ENCODE measurements at regions of chr6 and their contacts with region 1.

Region 1: GRCh38 chr6:100951597-100951996 is 70.5 kb upstream of the ASCC3 start:
- DNase-seq: no peak
- H3K4me3 ChIP-seq: no peak overlapping the region
- H3K27ac ChIP-seq: no peak overlapping the region
- H3K4me1 ChIP-seq: no peaks in the 10 kb centered on the region
- H3K27me3 ChIP-seq: no peaks in the 10 kb centered on the region
- CTCF ChIP-seq: no peak
- POLR2A ChIP-seq: no peak

Region 2: GRCh38 chr6:100171533-100172321 is 779.9 kb before region 1 on chr6:
- intact Hi-C with region 1: loop called (anchors 5 kb)
- DNase-seq: no peak
- H3K4me3 ChIP-seq: no peak overlapping the region
- H3K27ac ChIP-seq: no peak overlapping the region
- H3K4me1 ChIP-seq: no peaks in the 10 kb centered on the region
- H3K27me3 ChIP-seq: no peaks in the 10 kb centered on the region
- CTCF ChIP-seq: no peak
- POLR2A ChIP-seq: no peak

Region 3: DNA sequence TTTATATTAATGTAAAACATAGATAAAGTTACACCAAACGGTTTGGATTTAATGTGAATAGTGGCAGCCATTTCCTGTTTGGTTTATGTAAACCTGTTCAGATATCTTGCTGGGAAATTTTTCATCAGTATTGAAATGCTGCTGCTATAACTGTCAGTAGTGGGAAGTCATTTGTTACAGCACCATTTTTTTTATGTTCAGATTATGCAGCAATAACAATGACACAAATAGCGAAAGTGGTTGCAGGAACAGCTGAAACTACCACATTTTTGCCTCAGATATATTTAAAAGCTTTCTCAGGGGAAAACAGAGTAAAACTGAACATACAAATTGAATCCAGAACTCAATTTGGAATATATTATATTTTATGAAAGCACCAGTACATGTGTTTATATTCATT is 358.1 kb before region 1 on chr6:
- intact Hi-C with region 1: no loop called
- DNase-seq: no peak
- H3K4me3 ChIP-seq: no peak overlapping the region
- H3K27ac ChIP-seq: no peak overlapping the region
- H3K4me1 ChIP-seq: no peaks in the 10 kb centered on the region
- H3K27me3 ChIP-seq: no peaks in the 10 kb centered on the region
- CTCF ChIP-seq: no peak
- POLR2A ChIP-seq: no peak

Region 4: GRCh38 chr6:100880853-100881706 is 70.5 kb before region 1 on chr6 and contains the start of gene ASCC3:
- intact Hi-C with region 1: no loop called
- DNase-seq: peak; percentile 81 to 86
- H3K4me3 ChIP-seq: peak within 1 kb of the TSS; percentile 71 to 87 (median 82)
- H3K27ac ChIP-seq: peak within 1 kb of the TSS; percentile 93 to 94
- H3K4me1 ChIP-seq: no peaks in the 10 kb centered on the region
- H3K27me3 ChIP-seq: no peaks in the 10 kb centered on the region
- CTCF ChIP-seq: no peak
- POLR2A ChIP-seq: peak; percentile 20
- total RNA-seq, gene ASCC3: 23.5 to 49.3 (median 44.6) TPM

Measured in breast epithelium (tissue), 4 donors.